Dendritic cell treated with granulocyte-macrophage colony-stimulating factor and Interleukin-4, amounts not matched to agents 40 ng/mL and 50 ng/mL, for 4 days (primary cell): ENCODE measurements at regions of chr19 and their contacts with region 1.

Region 1: GRCh38 chr19:19420570-19421298 is 15.3 kb downstream of the GATAD2A start:
- H3K4me3 Mint-ChIP-seq: peak overlapping the region; percentile 7
- H3K27ac Mint-ChIP-seq: peak overlapping the region; percentile 54
- H3K4me1 Mint-ChIP-seq: peaks cover 61% of the 10 kb centered on the region
- H3K27me3 Mint-ChIP-seq: no peaks in the 10 kb centered on the region

Region 2: DNA sequence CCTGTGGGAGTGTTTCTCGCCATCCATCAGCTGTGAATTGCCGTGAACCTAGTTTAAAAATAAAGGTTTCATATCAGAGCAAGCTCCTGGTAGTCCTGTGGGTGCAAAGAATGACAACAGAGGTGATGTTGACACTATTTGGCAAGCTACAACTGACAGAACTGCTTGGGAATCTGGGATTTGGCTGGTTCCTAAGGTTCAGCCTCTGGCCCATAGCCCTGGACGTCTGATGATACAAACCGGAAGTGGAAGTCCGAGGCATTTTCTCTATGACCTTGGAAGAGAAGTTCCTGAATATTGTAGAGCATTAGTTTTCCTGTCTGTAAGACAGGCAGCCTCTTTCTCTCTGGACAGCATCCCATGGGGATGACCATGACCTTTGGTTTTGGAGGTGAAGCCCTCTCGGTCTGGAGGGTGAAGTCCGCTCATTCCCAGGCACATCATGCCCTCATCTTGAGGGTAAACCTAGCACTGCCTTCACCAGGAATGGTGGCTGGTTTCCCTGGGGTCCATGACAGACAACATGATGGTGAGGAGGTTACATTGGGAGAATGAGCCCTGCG is 13.8 kb after region 1 on chr19:
- intact Hi-C with region 1: no loop called
- H3K4me3 Mint-ChIP-seq: no peak overlapping the region
- H3K27ac Mint-ChIP-seq: peak overlapping the region; percentile 17
- H3K4me1 Mint-ChIP-seq: peaks cover 65% of the 10 kb centered on the region
- H3K27me3 Mint-ChIP-seq: no peaks in the 10 kb centered on the region

Region 3: DNA sequence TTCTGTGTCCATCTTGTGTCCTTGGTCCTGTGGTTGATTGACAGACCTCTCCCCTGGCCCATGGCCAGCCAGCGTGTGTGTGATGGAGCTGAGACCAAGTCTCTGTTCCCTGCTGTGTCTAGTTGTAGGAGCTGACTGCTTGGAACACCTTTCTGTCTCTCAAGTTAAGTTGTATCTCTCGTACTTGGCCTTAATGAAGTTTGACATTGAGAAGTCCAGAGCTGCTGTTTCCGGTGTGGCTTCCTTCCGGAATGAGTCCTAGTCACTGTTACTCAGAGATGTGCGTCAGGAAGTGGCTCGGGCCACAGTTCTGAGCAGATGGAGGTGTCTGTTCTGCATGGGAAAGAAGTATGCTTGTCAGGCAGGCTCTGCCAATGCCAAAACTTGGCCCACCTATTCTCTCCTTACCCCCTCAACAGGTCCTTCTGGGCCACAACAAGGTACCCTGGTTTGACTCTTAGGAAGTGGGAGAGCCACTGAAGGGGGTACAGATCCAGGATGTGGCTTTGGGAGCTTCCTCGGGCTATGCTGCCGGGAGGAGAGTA is 39.0 kb after region 1 on chr19:
- intact Hi-C with region 1: loop called (anchors 5 kb)
- H3K4me3 Mint-ChIP-seq: no peak overlapping the region
- H3K27ac Mint-ChIP-seq: peak overlapping the region; percentile 81
- H3K4me1 Mint-ChIP-seq: peaks cover 86% of the 10 kb centered on the region
- H3K27me3 Mint-ChIP-seq: no peaks in the 10 kb centered on the region